AG04450 (cell line): ENCODE measurements at regions of chr6 and their contacts with region 1.

Region 1: DNA sequence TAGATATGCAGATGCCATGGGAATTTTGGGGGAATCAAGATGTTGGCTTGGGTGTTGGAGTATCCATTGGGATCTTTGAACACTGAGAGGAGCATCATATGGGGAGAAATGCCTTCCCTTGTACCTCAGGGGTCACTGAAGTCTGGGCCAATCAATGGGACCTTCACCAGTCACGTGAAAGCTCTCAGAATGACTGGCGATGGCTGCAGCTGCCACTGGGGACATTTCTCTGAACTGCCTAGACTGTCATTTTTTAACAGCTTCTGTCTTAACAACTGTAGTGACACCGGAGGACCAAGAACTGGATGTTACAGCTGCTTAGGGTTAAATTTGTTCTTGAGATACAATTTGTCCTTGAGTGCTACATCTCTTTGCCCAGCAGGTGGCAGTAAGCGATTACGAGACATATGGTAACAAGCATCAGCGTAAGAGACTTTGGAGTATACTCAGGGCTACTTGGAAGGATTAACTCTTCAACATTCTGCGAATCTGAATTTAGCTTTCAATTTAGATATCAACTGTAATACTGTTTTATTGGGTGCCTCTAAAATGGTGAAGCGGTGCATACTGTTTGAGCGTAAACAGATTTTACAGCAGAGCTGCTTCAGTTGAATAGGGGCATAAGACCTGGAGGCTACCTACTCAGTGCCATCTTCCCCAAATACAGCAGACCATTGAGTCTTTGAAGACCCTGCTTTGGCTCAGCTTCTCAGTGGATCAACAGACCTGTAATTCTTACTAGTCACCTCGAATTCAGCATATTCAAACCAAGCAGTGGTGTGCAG is 36.0 kb downstream of the CCN2 start:
- DNase-seq: peak; percentile 74
- H3K4me3 ChIP-seq: no peak overlapping the region
- H3K27ac ChIP-seq: no peak overlapping the region
- H3K27me3 ChIP-seq: no peaks in the 10 kb centered on the region
- CTCF ChIP-seq: peak; percentile 90

Region 2: DNA sequence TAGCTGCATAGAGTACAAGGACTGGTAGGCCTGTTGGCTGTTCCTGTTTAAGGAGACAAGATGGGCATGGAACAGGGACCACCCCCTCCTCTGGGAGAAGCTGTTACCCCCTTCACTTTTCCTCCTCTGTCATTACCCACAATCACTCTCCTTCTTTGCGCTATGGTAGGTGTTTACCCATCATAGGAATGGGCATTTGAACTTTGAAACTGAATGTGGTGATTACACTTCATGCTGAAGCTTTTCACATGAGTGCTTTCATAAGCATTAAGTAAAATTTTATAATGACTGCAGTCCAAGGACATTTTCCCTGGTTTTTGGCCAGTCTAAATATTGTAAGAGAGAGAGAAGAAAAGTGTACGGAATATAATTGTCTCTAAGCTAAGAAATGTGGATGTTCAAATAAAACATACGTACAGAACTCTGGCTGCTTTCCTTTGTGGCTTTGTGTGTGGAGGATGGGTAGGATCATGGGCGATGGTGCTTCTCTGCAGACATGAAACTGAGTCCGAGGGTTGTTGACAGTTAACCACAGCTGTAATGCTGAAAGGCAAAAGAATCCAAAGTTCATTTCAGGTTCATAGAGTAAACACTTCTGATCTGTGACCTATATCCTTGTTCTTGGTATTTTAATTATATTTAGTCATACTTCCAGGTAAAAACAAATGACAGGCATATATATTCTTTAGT is 20.3 kb before region 1 on chr6:
- CTCF ChIA-PET with region 1: interaction called, 10 read pairs
- POLR2A ChIA-PET with region 1: no interaction called
- DNase-seq: no peak
- H3K4me3 ChIP-seq: no peak overlapping the region
- H3K27ac ChIP-seq: no peak overlapping the region
- H3K27me3 ChIP-seq: no peaks in the 10 kb centered on the region
- CTCF ChIP-seq: no peak

Region 3: DNA sequence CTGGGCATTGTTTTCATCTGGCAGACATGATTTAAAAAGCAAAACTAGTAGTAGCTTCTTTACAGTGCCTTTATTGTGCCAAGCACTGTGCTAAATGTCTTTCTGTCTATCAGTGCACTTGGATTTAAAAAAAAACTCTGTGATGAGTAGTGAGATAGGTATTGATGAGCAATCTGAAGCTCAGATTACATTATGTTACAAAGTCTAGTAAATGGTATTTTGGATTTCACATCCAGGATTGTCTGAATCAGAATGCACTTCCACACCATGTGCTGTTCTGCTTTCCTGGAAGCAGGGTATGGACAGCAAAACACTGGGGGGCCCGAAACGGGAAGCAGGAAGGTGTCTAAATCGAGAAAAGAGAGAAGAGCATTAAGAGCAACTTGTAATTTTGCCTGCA is 139.4 kb after region 1 on chr6:
- CTCF ChIA-PET with region 1: no interaction called
- POLR2A ChIA-PET with region 1: no interaction called
- DNase-seq: peak; percentile 53
- H3K4me3 ChIP-seq: no peak overlapping the region
- H3K27ac ChIP-seq: peak overlapping the region; percentile 90
- H3K27me3 ChIP-seq: no peaks in the 10 kb centered on the region
- CTCF ChIP-seq: no peak

Region 4: DNA sequence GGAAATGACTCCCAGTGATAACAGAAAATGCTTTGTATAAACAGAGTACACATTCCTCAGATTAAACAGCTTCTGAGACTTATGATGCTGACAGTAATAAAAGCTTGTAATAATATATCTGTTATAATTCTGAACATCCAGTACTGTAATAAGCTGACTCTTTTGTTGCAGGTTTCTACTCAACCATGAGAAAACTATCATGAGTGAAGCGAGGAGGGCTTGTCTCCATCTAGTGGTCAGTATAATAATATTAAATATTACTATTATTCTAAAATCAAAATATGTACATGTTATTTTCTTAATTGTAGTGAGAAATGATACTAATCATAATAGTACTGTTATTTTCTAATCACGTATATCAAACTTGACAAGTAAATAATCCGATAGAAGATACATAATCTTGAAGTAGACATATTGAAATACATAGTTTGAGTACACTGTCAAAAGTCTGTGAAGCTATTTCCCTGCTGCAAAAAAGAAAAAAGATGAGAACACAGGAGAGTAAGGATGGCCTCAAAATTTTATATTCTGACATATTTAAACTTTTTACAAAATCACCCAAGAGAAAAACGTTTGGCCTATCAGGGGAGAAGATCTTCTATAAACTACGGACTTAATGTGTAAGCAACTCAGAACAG is 303.0 kb after region 1 on chr6:
- CTCF ChIA-PET with region 1: interaction called, 15 read pairs
- POLR2A ChIA-PET with region 1: no interaction called
- DNase-seq: peak; percentile 23
- H3K4me3 ChIP-seq: no peak overlapping the region
- H3K27ac ChIP-seq: no peak overlapping the region
- H3K27me3 ChIP-seq: no peaks in the 10 kb centered on the region
- CTCF ChIP-seq: peak; percentile 59

Region 5: DNA sequence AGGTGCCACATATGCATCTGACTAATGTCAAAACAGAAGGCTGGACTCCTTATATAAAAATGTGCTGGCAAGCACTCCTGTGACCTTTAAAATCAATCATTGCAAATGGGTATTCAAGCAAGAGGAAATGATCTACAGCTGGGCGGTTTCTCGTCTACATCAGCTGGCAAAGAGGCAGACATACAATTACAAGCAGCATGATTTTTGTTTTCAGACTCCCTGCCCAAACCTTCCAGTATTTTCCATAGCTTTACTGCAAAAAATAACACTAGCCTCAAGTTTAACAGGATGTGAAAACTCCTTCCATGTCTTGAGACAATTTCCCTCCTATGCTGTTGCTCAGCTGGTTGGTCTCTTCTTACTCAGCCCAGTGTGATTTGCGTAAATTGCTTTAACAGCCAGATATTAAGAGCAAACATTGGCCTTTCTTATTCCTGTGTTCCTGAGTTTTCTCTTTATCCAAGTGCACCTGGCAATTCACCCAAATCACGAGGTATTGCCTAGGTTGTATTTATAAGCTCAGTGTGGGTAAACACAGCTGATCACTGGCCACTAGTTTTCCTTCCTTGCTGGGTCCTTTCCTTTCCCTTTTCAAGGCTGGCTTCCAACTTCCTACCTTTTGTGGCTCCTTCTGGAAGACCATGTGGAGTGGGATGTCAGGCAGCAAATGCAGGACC is 355.7 kb after region 1 on chr6:
- CTCF ChIA-PET with region 1: interaction called, 23 read pairs
- POLR2A ChIA-PET with region 1: no interaction called
- DNase-seq: no peak
- H3K4me3 ChIP-seq: no peak overlapping the region
- H3K27ac ChIP-seq: no peak overlapping the region
- H3K27me3 ChIP-seq: no peaks in the 10 kb centered on the region
- CTCF ChIP-seq: no peak

Region 6: GRCh38 chr6:132300323-132300949 is 385.3 kb after region 1 on chr6:
- CTCF ChIA-PET with region 1: interaction called, 120 read pairs
- POLR2A ChIA-PET with region 1: no interaction called
- DNase-seq: peak; percentile 41
- H3K4me3 ChIP-seq: no peak overlapping the region
- H3K27ac ChIP-seq: no peak overlapping the region
- H3K27me3 ChIP-seq: no peaks in the 10 kb centered on the region
- CTCF ChIP-seq: peak; percentile 71

Region 7: GRCh38 chr6:132483779-132484679 is 568.9 kb after region 1 on chr6:
- CTCF ChIA-PET with region 1: interaction called, 17 read pairs
- POLR2A ChIA-PET with region 1: no interaction called
- DNase-seq: peak; percentile 37
- H3K4me3 ChIP-seq: no peak overlapping the region
- H3K27ac ChIP-seq: no peak overlapping the region
- H3K27me3 ChIP-seq: no peaks in the 10 kb centered on the region
- CTCF ChIP-seq: peak; percentile 69